ENCODE measurements at regions of chrX and their contacts with region 1.

Region 1: DNA sequence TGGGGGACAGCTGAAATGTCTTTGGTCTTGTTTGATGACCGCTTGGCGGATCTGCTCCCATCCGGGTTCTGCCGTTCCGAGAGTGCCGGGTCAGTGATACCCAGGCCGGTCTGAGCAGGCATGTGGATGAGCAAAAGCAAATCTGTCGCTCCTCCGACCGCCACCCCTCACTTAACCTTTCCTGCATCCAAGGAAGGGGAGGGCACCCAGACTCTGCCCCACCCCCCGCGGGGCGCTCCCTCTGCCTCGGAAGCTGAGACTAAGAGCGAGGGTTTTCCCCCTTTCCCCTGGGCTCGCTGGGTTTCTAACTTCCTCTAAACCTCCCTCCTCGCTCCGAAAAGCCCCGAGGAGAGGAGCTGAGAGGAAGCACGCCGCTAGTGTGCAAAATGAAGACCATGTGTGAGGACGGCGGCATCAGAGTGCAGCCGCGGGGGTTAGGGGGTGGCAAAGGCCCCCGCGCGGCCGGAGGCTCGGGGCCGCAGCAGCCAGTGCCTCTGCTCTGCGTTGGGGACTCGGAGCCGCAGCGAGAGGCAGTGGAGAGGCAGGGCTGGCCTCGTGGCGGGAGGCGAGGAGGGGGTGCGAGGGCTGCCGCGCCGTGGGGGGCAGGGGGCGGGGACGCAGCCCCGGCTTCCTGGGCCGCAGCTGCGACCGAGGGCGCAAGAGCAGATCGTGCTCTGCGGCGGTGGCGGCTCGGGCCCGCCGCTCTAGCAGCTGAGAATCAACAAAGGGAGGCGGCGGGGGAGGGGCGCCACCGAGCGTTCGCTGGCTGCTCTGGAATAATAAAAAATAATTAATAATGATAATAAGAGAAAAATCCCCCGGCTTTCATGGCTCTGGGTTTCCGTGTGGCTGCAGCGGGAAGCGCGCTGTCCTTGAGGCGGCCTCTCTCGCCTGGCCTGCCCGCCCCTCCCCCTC is 55.8 kb upstream of the BCOR start:
- DNase-seq: peak; percentile 91
- H3K4me3 Mint-ChIP-seq: peak overlapping the region; percentile 72
- H3K27ac Mint-ChIP-seq: peak overlapping the region; percentile 53
- H3K4me1 Mint-ChIP-seq: peaks cover 10% of the 10 kb centered on the region
- H3K27me3 Mint-ChIP-seq: no peaks in the 10 kb centered on the region

Region 2: DNA sequence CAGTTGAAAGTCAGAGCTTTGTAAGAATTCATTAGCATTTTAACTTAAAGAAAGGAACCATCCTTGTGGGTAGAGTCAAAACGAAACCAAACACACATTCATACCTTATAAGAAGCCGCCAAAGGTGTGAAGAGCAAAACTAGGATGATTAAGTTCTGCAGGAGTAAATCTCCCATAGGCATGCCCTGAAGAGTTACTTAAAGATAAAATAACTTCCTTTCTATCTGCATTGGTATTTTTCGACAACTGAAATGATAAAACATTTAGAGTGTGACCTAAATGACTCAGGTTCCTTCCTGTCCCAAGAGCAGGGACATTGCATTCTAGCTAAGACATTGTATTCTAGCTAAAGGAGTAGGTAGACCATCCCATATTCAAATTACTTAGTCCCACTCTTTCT is 131.2 kb before region 1 on chrX:
- CTCF ChIA-PET with region 1: no interaction called
- intact Hi-C with region 1: loop called (anchors 1 kb)
- DNase-seq: peak; percentile 16
- H3K4me3 Mint-ChIP-seq: no peak overlapping the region
- H3K27ac Mint-ChIP-seq: no peak overlapping the region
- H3K4me1 Mint-ChIP-seq: peaks cover 14% of the 10 kb centered on the region
- H3K27me3 Mint-ChIP-seq: no peaks in the 10 kb centered on the region

Region 3: DNA sequence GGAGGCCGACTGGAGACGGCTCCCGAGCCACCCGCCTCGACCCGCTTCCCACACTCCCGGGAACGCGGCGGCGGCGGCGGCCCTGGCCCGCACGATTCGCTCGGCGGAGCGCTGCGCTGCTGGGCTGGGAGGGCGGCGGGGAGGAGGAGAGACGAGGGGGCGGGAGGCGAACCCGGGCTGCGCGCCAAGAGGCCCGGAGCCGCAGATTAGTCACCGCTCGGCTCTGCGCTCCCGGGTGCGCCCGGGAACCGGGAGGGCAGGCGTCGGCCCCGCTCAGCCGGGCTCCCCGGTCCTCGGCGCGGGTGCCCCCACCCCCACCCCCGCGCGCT is 44.7 kb before region 1 on chrX:
- CTCF ChIA-PET with region 1: no interaction called
- intact Hi-C with region 1: loop called (anchors 1 kb)
- DNase-seq: peak; percentile 71
- H3K4me3 Mint-ChIP-seq: peak overlapping the region; percentile 50
- H3K27ac Mint-ChIP-seq: no peak overlapping the region
- H3K4me1 Mint-ChIP-seq: peaks cover 8% of the 10 kb centered on the region
- H3K27me3 Mint-ChIP-seq: peaks cover 2% of the 10 kb centered on the region

Measured in activated naive CD4-positive, alpha-beta T cell treated with anti-CD3 and anti-CD28 coated beads for 36 hours (primary cell).